Common myeloid progenitor, CD34-positive (primary cell): ENCODE measurements at regions of chr2 and their contacts with region 1.

Region 1: DNA sequence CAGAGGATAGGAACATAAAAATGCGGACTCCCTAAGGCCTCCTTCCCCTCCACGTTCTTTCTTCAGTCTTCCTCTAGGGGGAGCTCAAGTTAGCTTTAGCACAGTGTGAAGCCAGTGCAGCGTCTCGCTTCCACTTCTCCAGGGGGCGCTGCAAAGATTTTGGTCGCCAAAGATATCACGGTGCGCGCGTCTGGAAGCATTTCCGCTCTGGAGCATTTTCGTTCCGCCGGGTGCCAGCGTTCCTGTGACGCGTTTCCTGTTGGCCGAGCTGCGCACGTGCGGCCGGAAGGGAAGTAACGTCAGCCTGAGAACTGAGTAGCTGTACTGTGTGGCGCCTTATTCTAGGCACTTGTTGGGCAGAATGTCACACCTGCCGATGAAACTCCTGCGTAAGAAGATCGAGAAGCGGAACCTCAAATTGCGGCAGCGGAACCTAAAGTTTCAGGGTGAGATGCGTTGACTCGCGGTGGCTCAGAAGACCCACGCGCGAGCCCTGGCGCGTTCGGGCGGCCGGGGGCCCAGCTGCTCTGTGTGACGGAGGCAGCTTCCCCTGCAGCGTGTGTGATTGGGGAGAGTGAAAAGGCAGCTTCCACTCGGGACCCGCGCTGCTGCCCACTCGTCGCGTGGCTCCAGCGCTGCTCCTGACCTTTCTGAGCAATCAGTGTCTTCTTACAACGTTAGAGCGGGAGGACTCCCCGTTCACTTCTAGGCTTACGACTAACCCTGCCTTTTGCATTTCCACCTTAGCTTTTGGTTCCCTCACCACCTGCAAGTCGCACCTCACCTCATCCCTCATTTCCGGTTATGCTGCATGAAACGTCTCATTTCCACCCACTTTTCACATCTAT is at the start of gene DDX18:
- DNase-seq: peak; percentile 99
- H3K4me3 ChIP-seq: peak within 1 kb of the TSS; percentile 77 to 100 (median 91)
- H3K27ac ChIP-seq: peak within 1 kb of the TSS; percentile 88 to 97
- H3K4me1 ChIP-seq: peaks cover 6 to 16% (median 8%) of the 10 kb centered on the region in 4 experiments
- H3K27me3 ChIP-seq: no peaks in the 10 kb centered on the region

Region 2: GRCh38 chr2:117179405-117179804 is 635.2 kb before region 1 on chr2:
- CTCF ChIA-PET with region 1: no interaction called
- POLR2A ChIA-PET with region 1: no interaction called
- DNase-seq: no peak
- H3K4me3 ChIP-seq: no peak overlapping the region
- H3K27ac ChIP-seq: no peak overlapping the region
- H3K4me1 ChIP-seq: no peaks in the 10 kb centered on the region
- H3K27me3 ChIP-seq: no peaks in the 10 kb centered on the region

Region 3: GRCh38 chr2:117646099-117646498 is 168.5 kb before region 1 on chr2:
- CTCF ChIA-PET with region 1: no interaction called
- POLR2A ChIA-PET with region 1: no interaction called
- DNase-seq: no peak
- H3K4me3 ChIP-seq: no peak overlapping the region
- H3K27ac ChIP-seq: no peak overlapping the region
- H3K4me1 ChIP-seq: no peaks in the 10 kb centered on the region
- H3K27me3 ChIP-seq: no peaks in the 10 kb centered on the region

Region 4: DNA sequence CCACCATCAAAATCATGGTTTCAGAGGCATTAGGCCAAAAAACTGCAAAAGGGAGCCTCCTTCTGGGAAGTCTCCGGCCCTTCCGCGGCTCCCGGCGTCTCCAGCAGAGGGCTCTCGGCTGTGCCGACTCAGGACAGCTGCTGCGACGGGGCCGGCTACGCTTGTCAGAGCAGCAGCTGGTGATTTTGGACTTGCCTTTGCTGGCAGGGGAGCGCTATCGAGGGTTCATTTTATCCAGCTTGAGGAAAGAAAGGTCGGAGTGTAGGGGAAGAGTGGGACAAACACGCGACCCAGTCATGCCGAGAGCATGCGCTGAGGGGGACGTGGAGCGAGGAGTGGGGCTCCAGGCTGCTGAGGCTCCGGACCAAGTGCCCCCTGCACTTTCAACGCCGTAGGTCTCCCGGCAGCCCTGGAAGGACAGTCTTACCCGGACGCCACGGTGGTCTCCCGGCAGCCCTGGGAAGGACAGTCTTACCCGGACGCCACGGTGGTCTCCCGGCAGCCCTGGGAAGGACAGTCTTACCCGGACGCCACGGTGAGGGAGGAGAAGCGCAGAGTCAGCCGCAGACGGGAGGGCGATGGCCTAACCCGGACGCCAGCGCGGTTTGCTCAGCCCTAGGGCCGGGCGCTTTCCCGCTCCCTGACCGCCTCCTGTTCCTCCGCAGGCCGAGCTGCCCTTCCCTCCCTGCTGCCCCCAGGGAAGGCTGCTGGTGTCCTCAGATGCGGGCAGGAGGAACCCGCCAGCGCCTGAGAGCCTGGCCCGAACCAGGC is 21.5 kb after region 1 on chr2:
- CTCF ChIA-PET with region 1: interaction called, 17 read pairs
- POLR2A ChIA-PET with region 1: no interaction called
- DNase-seq: peak; percentile 73 to 78 (median 76)
- H3K4me3 ChIP-seq: peak overlapping the region in 6 of 7 experiments; percentile 15 to 77 (median 60)
- H3K27ac ChIP-seq: no peak overlapping the region
- H3K4me1 ChIP-seq: peaks cover 0 to 9% (median 7%) of the 10 kb centered on the region in 4 experiments
- H3K27me3 ChIP-seq: peaks cover 0 to 9% (median 4%) of the 10 kb centered on the region in 5 experiments

Region 5: DNA sequence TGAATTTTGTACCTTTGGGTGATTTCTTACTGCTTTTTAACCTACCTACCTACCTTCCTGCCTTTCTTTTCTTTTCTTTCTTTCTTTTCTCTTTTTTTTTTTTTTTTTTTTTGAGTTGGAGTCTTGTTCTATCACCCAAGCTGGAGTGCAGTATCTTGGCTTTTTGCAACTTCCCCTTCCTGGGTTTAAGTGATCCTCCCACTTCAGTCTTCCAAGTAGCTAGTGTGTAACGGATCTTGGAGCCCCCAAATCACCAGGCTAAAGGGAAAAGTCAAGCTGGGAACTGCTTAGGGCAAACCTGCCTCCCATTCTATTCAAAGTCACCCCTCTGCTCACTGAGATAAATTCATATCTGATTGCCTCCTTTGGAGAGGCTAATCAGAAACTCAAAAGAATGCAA is 61.1 kb after region 1 on chr2:
- CTCF ChIA-PET with region 1: no interaction called
- POLR2A ChIA-PET with region 1: no interaction called
- DNase-seq: no peak
- H3K4me3 ChIP-seq: no peak overlapping the region
- H3K27ac ChIP-seq: no peak overlapping the region
- H3K4me1 ChIP-seq: no peaks in the 10 kb centered on the region
- H3K27me3 ChIP-seq: no peaks in the 10 kb centered on the region

Region 6: DNA sequence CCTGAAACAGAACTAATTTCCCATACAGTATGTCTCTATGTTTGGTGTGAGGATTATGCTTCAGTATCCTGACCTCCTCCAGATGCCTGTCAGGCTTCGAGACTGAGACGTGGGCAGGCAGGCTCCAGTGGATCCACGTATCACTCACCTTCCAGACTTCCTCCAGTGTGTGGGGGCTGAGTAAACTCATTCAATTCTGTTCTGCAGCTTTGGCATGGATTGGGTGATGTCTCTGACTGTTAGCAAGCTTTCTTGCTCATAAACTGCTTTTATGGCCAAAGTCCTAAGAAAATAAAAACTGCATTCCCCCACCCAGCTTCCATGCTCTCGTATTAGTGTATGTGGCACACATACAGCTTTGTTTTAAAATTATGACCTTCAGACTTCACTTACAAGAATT is 145.6 kb after region 1 on chr2:
- CTCF ChIA-PET with region 1: no interaction called
- POLR2A ChIA-PET with region 1: interaction called, 10 read pairs
- DNase-seq: no peak
- H3K4me3 ChIP-seq: no peak overlapping the region
- H3K27ac ChIP-seq: no peak overlapping the region
- H3K4me1 ChIP-seq: no peaks in the 10 kb centered on the region
- H3K27me3 ChIP-seq: no peaks in the 10 kb centered on the region